PC-3 (cell line): ENCODE measurements at regions of chr11 and their contacts with region 1.

Region 1: DNA sequence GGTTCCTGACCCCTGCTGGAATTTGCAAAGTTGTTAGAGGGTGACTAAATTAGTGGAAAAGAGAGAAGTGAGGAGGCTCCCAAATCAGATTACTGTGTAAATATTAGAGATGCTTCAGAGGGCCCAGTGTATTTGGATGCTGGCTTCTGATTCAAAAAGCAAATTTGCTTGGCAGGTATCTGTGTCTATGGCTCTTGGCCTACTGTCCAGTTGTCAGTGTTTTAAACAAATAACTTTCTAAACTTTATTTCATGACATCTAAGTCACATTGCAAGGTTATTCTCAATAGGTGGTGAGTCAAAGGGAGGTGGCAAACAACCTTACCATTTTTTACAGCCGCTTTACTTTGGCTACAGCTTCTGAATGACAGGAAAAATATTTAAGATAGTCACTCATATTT is 720.1 kb downstream of the KCNA4 start:
- DNase-seq: peak; percentile 74
- ATAC-seq: peak; percentile 66
- H3K4me3 ChIP-seq: no peak overlapping the region
- H3K27ac ChIP-seq: peak overlapping the region; percentile 78
- H3K4me1 ChIP-seq: peaks cover 57% of the 10 kb centered on the region
- H3K27me3 ChIP-seq: no peaks in the 10 kb centered on the region
- CTCF ChIP-seq: no peak

Region 2: GRCh38 chr11:29282088-29282487 is 14.6 kb before region 1 on chr11:
- CTCF ChIA-PET with region 1: no interaction called
- POLR2A ChIA-PET with region 1: no interaction called
- intact Hi-C with region 1: loop called (anchors 1 kb)
- DNase-seq: peak; percentile 95
- ATAC-seq: peak; percentile 96
- H3K4me3 ChIP-seq: peak overlapping the region; percentile 15; the same call in 1 of the 2 replicates
- H3K27ac ChIP-seq: peak overlapping the region; percentile 57
- H3K4me1 ChIP-seq: peaks cover 28% of the 10 kb centered on the region
- H3K27me3 ChIP-seq: no peaks in the 10 kb centered on the region
- CTCF ChIP-seq: no peak